ENCODE measurements at regions of chr7 and their contacts with region 1.

Region 1: GRCh38 chr7:90155206-90155605 is 937 bp downstream of the STEAP1 start:
- DNase-seq: no peak
- ATAC-seq: no peak
- H3K4me3 ChIP-seq: no peak overlapping the region
- H3K27ac ChIP-seq: no peak overlapping the region
- H3K4me1 ChIP-seq: no peaks in the 10 kb centered on the region
- H3K27me3 ChIP-seq: no peaks in the 10 kb centered on the region
- CTCF ChIP-seq: no peak
- EP300 ChIP-seq: no peak
- POLR2A ChIP-seq: no peak
- RAD21 ChIP-seq: no peak

Region 2: DNA sequence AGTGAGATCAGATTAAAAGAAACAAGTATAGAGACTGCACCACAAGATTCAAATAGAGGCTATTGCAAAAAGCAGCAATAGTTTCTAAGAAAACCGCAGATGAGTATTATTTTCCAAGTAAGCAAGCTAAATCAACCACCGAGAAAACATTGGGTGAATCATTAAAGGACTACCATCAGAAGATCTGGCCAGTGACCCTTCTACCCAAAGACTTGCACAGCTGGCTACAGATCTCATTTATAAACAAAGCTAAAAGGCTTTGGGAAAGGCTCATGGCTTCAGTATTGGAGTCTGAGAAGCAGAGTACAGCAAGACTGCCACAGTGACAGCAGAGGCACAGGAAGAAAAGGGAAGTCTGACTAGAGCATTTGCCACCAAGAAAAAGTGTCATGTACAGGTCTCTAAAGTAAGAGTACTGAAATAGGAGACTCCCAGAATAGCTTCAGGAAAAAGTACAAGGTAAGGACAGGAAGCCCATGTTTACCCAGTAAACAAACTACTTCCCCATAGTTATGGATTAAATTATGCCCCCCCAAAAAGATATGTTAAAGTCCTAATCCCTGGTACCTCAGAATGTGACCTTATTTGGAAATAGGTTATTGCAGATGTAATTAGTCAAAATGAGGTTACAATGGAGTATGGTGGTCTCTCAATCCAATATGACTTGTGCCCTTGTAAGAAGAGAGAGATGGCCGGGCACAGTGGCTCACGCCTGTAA is 18.1 kb after region 1 on chr7:
- CTCF ChIA-PET with region 1: interaction called, 7 read pairs
- POLR2A ChIA-PET with region 1: interaction called, 3 read pairs
- RAD21 ChIA-PET with region 1: interaction called, 5 read pairs
- SMC1A ChIA-PET with region 1: interaction called, 12 read pairs
- in situ Hi-C with region 1: no loop called
- intact Hi-C with region 1: loop called (anchors 2 kb)
- DNase-seq: peak; percentile 64
- ATAC-seq: peak; percentile 93
- H3K4me3 ChIP-seq: no peak overlapping the region
- H3K27ac ChIP-seq: no peak overlapping the region
- H3K4me1 ChIP-seq: no peaks in the 10 kb centered on the region
- H3K27me3 ChIP-seq: no peaks in the 10 kb centered on the region
- CTCF ChIP-seq: no peak
- EP300 ChIP-seq: peak in 1 of 2 experiments; percentile 48; a peak in 1 of 4 replicates
- POLR2A ChIP-seq: no peak
- RAD21 ChIP-seq: no peak

Region 3: GRCh38 chr7:90211391-90212148 is 56.4 kb after region 1 on chr7 and contains the start of gene STEAP2:
- CTCF ChIA-PET with region 1: interaction called, 18 read pairs
- POLR2A ChIA-PET with region 1: interaction called, 4 read pairs
- RAD21 ChIA-PET with region 1: interaction called, 41 read pairs
- SMC1A ChIA-PET with region 1: interaction called, 5 read pairs
- in situ Hi-C with region 1: no loop called
- intact Hi-C with region 1: loop called (anchors 1 kb)
- DNase-seq: no peak
- ATAC-seq: peak; percentile 91
- H3K4me3 ChIP-seq: no peak within 1 kb of the TSS
- H3K27ac ChIP-seq: no peak within 1 kb of the TSS
- H3K4me1 ChIP-seq: no peaks in the 10 kb centered on the region
- H3K27me3 ChIP-seq: peaks cover 1 to 17% of the 10 kb centered on the region in 2 experiments
- CTCF ChIP-seq: peak; percentile 32 to 61 (median 44)
- EP300 ChIP-seq: no peak
- POLR2A ChIP-seq: no peak
- RAD21 ChIP-seq: no peak
- polyA plus RNA-seq, gene STEAP2: 0.64 to 0.80 TPM

Region 4: GRCh38 chr7:90250601-90251303 is 95.5 kb after region 1 on chr7:
- CTCF ChIA-PET with region 1: interaction called, 15 read pairs
- POLR2A ChIA-PET with region 1: interaction called, 7 read pairs
- RAD21 ChIA-PET with region 1: interaction called, 9 read pairs
- SMC1A ChIA-PET with region 1: interaction called, 7 read pairs
- in situ Hi-C with region 1: no loop called
- intact Hi-C with region 1: loop called (anchors 1 kb)
- DNase-seq: no peak
- ATAC-seq: peak; percentile 45
- H3K4me3 ChIP-seq: no peak overlapping the region
- H3K27ac ChIP-seq: no peak overlapping the region
- H3K4me1 ChIP-seq: no peaks in the 10 kb centered on the region
- H3K27me3 ChIP-seq: peaks cover 0 to 6% of the 10 kb centered on the region in 2 experiments; a peak in 1 of 4 replicates
- CTCF ChIP-seq: no peak
- EP300 ChIP-seq: no peak
- POLR2A ChIP-seq: no peak
- RAD21 ChIP-seq: no peak

Region 5: DNA sequence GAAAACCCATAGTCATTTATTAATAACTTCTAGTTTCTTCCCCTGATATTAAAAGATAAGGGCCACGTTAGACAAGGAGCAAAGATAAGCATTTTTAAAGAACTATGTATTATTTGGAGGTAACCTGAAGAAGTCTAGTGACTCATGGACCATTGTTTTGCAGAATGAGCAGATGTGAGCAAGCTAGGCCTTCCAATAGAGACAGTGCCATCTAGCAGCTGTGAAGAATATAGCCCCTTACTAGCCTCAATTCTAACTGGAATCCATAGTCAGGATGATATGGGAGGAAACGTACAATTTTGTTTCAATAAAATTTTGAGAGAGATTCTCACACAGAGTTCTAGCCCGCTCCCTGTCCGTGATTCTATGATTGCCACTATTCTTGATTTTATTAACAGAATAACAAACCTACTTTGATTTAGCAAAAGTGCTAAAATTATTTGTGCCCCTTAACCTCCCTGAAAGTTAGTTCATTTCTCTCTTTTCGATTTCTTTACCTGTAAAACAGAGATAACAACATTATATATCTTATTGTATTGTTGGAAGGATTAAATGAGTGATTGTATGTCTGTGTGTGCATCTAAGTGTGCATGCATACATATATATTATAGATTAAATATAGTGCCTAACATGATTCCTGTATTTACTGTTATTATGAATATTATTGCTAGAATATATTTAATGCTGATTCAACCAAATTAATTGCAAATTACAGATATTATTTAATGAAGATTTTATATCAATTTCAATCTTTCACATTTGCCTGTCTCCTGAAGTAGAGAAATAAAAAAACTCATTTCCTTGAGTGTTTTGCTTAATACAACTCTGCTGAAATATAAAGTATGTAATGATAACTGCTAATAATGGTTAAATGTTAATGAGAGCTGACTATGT is 143.2 kb after region 1 on chr7:
- CTCF ChIA-PET with region 1: interaction called, 39 read pairs
- POLR2A ChIA-PET with region 1: no interaction called
- RAD21 ChIA-PET with region 1: interaction called, 13 read pairs
- SMC1A ChIA-PET with region 1: interaction called, 15 read pairs
- in situ Hi-C with region 1: no loop called
- intact Hi-C with region 1: loop called (anchors 1 kb)
- DNase-seq: no peak
- ATAC-seq: peak; percentile 98
- H3K4me3 ChIP-seq: no peak overlapping the region
- H3K27ac ChIP-seq: no peak overlapping the region
- H3K4me1 ChIP-seq: no peaks in the 10 kb centered on the region
- H3K27me3 ChIP-seq: no peaks in the 10 kb centered on the region; a peak in 1 of 4 replicates
- CTCF ChIP-seq: peak; percentile 58 to 72 (median 67)
- EP300 ChIP-seq: no peak
- POLR2A ChIP-seq: no peak
- RAD21 ChIP-seq: peak; percentile 56

Region 6: DNA sequence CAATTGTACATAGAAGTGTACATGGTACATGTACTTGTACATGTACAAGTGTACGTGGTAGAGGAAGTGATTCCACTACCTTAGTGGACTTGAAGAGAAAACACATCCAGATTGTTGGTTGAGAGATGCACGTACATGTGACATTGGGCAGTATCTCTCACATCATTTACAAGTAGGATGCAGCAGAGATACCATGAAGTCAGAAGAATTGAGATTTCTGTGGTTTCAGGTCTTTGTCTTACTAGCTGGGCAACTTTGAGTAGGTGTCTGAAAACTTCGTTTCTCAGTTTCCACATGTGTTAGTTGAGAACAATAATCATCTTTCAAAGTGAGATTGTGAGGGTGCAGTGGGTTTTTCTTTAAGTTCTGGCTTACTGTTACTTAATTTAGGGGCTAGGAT is 269.5 kb after region 1 on chr7:
- CTCF ChIA-PET with region 1: interaction called, 55 read pairs
- POLR2A ChIA-PET with region 1: no interaction called
- RAD21 ChIA-PET with region 1: interaction called, 31 read pairs
- SMC1A ChIA-PET with region 1: interaction called, 39 read pairs
- in situ Hi-C with region 1: no loop called
- intact Hi-C with region 1: loop called (anchors 1 kb)
- DNase-seq: peak; percentile 53
- ATAC-seq: peak; percentile 94
- H3K4me3 ChIP-seq: no peak overlapping the region
- H3K27ac ChIP-seq: no peak overlapping the region
- H3K4me1 ChIP-seq: peaks cover 10% of the 10 kb centered on the region
- H3K27me3 ChIP-seq: no peaks in the 10 kb centered on the region
- CTCF ChIP-seq: no peak
- EP300 ChIP-seq: peak; percentile 67 to 86; a peak in 3 of 4 replicates
- POLR2A ChIP-seq: no peak
- RAD21 ChIP-seq: no peak